Ascending aorta (tissue), 2 donors: ENCODE measurements at regions of chr5 and their contacts with region 1.

Region 1: DNA sequence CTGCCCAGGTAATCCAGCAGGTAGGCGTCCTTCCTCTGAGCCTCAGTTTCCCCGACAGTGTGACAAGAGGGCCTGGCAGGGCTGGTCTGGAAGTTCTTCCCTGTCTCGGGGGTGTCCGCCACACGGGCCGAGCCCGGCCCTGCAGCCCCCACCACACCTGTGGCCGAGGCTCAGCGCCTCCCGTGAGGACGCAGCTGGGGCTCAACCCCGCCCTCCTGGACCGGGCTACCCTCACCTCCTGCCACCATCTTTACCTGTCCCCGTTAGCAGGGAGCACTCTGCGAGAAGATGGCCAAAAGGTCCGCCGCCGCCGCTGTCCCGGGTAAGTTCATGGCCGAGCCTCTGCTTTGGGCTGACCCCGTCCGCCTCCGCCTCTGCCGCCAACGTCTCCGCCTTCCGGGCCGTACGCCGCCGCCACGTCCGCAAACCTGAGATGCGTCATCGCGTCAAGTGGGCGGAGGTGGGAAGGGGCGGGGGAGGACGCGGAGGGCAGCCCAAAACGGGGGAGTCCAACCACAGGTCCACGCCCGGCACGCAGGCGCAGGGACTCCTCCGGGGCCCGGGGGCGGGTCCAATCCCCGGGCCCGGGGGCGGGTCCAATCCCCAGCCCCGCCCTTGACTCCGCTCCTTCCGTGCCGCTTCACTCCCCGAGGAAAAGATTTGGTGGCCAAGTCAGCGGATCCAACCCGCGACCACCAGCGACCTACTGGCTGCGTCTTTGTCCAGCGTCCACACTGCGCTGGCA is at the start of gene LYSMD3:
- DNase-seq: peak; percentile 91 to 99
- H3K4me3 ChIP-seq: peak within 1 kb of the TSS; percentile 81 to 94
- H3K27ac ChIP-seq: peak within 1 kb of the TSS; percentile 90 to 96
- H3K4me1 ChIP-seq: peaks cover 8 to 12% of the 10 kb centered on the region in 2 donors
- H3K27me3 ChIP-seq: no peaks in the 10 kb centered on the region
- CTCF ChIP-seq: no peak
- total RNA-seq, gene LYSMD3: 4.0 TPM

Region 2: DNA sequence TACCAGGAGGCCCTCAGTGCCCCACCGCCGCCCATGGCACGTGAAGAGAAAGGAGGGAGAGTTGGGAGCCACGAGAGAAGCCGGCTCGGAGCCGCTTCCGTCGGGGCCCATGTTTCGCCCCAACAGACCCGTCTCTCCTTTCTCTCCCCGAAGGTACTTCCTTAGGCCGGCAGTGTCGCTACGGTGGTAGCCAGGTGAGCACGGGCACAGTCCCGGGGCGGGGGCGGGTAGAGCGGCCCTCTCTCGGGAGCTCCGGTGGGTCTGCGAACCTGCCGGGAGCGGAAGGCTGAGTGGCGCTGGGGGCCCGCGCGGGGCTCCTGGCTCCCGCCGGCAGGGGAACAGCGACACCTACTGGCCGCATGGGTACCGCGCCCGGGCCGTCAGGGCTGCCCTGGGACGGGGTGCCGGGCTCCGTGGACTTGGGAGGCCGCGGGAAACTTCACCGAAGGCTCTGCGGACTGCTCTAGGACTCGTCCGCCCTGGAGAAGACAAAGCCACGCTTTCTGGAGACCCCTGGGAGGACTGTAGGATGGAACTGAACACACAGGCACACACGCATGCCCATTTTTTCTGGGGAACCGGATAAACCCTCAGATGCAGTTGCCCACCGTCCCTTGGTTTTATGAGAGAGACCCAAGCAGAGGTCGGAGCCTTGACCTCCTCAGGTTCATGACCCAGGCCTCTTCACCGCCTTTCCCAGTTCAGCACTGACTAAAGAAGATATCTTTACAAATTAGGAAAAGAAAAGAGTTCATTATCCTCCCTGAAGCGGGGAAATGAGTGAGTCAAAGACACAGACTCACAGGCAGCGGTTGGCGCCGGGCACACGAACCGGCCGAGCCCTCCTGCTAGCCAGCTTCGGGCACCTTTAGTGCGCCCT is 1848.9 kb before region 1 on chr5:
- intact Hi-C with region 1: loop called (anchors 10 kb)
- DNase-seq: no peak
- H3K4me3 ChIP-seq: peak overlapping the region; percentile 55 to 56
- H3K27ac ChIP-seq: no peak overlapping the region
- H3K4me1 ChIP-seq: peaks cover 0 to 6% of the 10 kb centered on the region in 2 donors
- H3K27me3 ChIP-seq: peaks cover 66% of the 10 kb centered on the region
- CTCF ChIP-seq: peak; percentile 74 to 94 (median 87)

Region 3: DNA sequence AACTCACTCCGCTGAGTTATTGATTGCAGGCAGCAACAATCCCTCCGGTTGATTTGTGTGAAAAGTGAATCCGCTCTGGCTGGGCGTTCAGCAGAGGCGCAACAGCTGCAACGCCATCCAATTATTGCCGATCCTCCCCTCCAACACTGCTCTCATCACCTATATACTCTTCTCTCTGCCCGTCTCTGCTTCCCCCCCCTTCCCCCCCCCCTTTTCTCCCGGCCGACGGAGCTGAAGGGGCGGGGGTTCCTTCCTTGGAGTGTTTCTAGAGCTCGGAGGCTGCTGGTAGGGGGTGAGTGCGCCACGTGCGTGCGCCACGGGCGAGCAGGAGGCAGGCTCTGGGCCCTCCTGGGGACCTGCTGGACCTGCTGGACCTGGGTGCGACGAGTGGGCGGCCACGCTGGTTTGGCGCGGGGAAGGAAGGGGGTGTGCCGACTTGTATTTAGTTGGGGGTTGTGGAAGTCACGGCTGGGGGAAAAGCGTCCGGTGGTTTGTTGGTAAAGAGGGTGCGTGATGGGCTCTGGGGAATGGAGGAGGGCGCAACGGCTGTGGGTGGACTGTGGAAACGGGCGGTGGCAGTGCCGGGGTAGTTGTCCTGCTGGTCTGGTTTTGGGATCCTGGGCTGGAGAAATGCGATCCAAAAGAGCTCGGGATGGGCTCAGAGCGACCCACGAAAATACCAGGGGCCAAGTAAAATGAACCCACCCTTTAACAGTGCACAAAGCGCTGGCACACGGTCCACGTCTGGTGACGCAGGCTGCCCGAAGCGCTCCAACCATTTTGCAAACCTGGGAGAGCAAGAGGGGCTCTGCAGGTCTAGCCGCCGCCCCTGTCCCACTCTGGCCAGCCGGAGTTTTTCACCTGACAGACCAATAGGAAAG is 1639.9 kb before region 1 on chr5:
- intact Hi-C with region 1: loop called (anchors 5 kb)
- DNase-seq: peak; percentile 35 to 85
- H3K4me3 ChIP-seq: peak overlapping the region; percentile 72 to 83
- H3K27ac ChIP-seq: peak overlapping the region; percentile 90 to 95
- H3K4me1 ChIP-seq: peaks cover 0 to 4% of the 10 kb centered on the region in 2 donors
- H3K27me3 ChIP-seq: no peaks in the 10 kb centered on the region
- CTCF ChIP-seq: no peak

Region 4: GRCh38 chr5:88940713-88941112 is 1588.7 kb before region 1 on chr5:
- intact Hi-C with region 1: loop called (anchors 10 kb)
- DNase-seq: no peak
- H3K4me3 ChIP-seq: no peak overlapping the region
- H3K27ac ChIP-seq: no peak overlapping the region
- H3K4me1 ChIP-seq: peaks cover 0 to 14% of the 10 kb centered on the region in 2 donors
- H3K27me3 ChIP-seq: no peaks in the 10 kb centered on the region
- CTCF ChIP-seq: no peak

Region 5: GRCh38 chr5:90409318-90410177 is 119.8 kb before region 1 on chr5 and contains the start of gene CETN3:
- intact Hi-C with region 1: loop called (anchors 1 kb)
- DNase-seq: peak; percentile 80 to 95
- H3K4me3 ChIP-seq: peak within 1 kb of the TSS; percentile 89 to 97
- H3K27ac ChIP-seq: peak within 1 kb of the TSS; percentile 95 to 98
- H3K4me1 ChIP-seq: peaks cover 0 to 5% of the 10 kb centered on the region in 2 donors
- H3K27me3 ChIP-seq: no peaks in the 10 kb centered on the region
- CTCF ChIP-seq: no peak
- total RNA-seq, gene CETN3: 36.7 TPM

Region 6: DNA sequence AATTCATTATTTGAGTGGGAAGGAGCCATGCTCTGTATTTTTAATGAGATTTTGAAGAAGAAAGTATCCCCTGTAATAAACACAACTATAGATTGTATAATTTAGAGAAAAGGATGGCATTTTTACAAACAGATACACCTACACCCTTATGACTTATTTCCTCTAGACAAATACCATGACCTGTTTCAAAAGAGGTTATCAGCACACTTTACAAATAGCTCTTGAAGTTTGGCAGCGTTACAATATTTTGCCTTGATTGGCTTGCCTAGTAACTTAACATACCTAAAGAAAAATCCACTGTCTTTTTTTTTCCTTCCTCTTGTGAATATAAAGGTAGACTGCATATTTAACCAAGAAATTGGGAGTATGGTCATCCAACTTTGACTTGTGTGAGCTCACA is 91.3 kb before region 1 on chr5:
- intact Hi-C with region 1: loop called (anchors 1 kb)
- DNase-seq: no peak
- H3K4me3 ChIP-seq: no peak overlapping the region
- H3K27ac ChIP-seq: no peak overlapping the region
- H3K4me1 ChIP-seq: no peaks in the 10 kb centered on the region
- H3K27me3 ChIP-seq: no peaks in the 10 kb centered on the region
- CTCF ChIP-seq: no peak

Region 7: DNA sequence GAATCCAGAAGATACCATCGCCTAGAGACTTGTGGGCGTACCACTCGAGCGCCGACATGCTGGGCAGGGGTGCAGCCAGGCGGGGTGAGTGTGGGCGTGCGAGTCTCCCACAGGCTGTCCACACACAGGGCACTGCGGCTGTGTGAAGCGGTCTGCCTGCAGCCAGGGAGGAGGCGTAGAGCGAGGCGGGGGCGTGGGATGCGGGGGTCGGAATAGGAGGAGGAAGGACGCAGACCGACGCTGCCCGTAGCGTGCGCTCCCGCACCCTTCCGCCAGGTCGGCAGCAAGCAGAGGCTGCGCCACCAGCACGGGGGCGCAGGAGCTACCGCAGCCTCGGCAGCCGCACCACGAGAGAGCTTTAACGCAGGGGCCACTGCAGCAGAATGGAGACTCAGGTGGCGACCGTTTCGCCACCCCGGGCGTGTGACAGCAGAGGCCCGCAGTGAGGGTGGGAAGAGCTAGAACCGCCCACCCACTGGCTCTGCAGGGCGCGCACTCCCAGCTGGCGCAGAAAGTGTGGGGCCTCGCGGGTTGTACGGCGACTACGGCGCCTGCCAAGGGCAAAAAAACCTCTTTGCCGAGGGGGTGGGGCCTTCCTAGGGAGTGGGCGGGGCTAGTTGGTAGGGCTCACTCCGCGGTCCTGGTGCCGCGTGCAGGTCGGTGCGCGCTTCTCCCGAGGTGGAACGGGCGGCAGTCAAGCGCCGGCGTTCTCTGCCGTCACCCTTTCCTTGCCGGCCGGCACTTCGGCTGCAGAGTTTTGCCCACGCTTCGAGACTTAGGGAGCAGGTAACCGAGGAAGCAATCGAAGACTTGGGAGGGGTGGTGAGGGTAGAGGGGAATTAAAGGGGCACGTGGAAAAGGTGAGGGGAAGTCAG is 54.9 kb before region 1 on chr5 and contains the starts of genes MBLAC2 and POLR3G:
- intact Hi-C with region 1: loop called (anchors 1 kb)
- DNase-seq: peak; percentile 48 to 92
- H3K4me3 ChIP-seq: peak within 1 kb of the TSS; percentile 67 to 81
- H3K27ac ChIP-seq: peak within 1 kb of the TSS in 1 of 2 donors; percentile 2
- H3K4me1 ChIP-seq: peaks cover 0 to 13% of the 10 kb centered on the region in 2 donors
- H3K27me3 ChIP-seq: no peaks in the 10 kb centered on the region
- CTCF ChIP-seq: peak; percentile 5 to 26 (median 19)
- total RNA-seq, gene MBLAC2: 4.7 TPM
- total RNA-seq, gene POLR3G: 1.5 TPM